Sigmoid colon (tissue), 7 donors: ENCODE measurements at regions of chr6 and their contacts with region 1.

Region 1: GRCh38 chr6:29887819-29888776 is 54.2 kb upstream of the HLA-A start:
- DNase-seq: peak; percentile 92
- H3K4me3 ChIP-seq: peak overlapping the region in 3 of 4 donors; percentile 45 to 62 (median 56)
- H3K27ac ChIP-seq: peak overlapping the region in 3 of 4 donors; percentile 84 to 91 (median 88)
- H3K4me1 ChIP-seq: peaks cover 0 to 3% (median 0%) of the 10 kb centered on the region in 4 donors
- H3K27me3 ChIP-seq: no peaks in the 10 kb centered on the region
- CTCF ChIP-seq: no peak
- EP300 ChIP-seq: no peak
- POLR2A ChIP-seq: no peak

Region 2: DNA sequence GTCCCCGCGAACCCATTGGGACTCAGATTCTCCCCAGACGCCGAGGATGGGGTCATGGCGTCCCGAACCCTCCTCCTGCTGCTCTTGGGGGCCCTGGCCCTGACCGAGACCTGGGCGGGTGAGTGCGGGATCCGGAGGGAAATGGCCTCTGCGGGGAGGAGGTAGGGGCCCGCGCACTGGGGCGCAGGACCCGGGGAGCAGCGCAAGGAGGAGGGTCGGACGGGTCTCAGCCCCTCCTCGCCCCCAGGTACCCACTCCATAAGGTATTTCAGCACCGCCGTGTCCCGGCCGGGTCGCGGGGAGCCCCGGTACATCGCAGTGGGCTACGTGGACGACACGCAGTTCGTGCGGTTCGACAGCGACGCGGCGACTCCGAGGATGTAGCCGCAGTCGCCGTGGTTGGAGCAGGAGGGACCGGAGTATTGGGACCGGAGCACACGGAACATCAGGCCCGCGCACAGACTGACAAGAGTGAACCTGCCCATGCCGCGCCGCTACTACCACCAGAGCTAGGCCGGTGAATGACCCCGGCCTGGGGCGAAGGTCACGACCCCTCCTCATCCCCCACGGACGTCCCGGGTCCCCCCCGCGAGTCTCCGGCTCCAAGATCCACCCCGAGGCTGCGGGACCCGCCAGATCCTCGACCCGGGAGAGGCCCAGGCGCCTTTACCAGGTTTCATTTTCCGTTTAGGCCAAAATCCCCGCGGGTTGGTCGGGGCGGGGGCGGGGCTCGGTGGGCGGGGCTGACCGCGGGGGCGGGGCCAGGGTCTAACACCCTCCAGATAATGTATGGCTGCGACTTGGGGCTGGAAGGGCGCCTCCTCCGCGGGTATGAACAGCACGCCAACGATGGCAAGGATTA is 38.5 kb after region 1 on chr6:
- intact Hi-C with region 1: loop called (anchors 5 kb)
- DNase-seq: peak; percentile 81
- H3K4me3 ChIP-seq: peak overlapping the region in 3 of 4 donors; percentile 48 to 69 (median 53)
- H3K27ac ChIP-seq: peak overlapping the region in 3 of 4 donors; percentile 82 to 86 (median 84)
- H3K4me1 ChIP-seq: peaks cover 0 to 4% (median 0%) of the 10 kb centered on the region in 4 donors
- H3K27me3 ChIP-seq: no peaks in the 10 kb centered on the region
- CTCF ChIP-seq: no peak
- EP300 ChIP-seq: no peak
- POLR2A ChIP-seq: peak; percentile 9 to 39

Region 3: GRCh38 chr6:29976588-29977424 is 88.7 kb after region 1 on chr6:
- intact Hi-C with region 1: loop called (anchors 2 kb)
- DNase-seq: peak; percentile 92
- H3K4me3 ChIP-seq: peak overlapping the region; percentile 26 to 58 (median 54)
- H3K27ac ChIP-seq: peak overlapping the region; percentile 89 to 97 (median 93)
- H3K4me1 ChIP-seq: peaks cover 0 to 27% (median 24%) of the 10 kb centered on the region in 4 donors
- H3K27me3 ChIP-seq: no peaks in the 10 kb centered on the region
- CTCF ChIP-seq: peak in 3 of 4 experiments; percentile 16 to 34 (median 18)
- EP300 ChIP-seq: no peak
- POLR2A ChIP-seq: peak; percentile 59 to 62

Region 4: GRCh38 chr6:30066577-30067459 is 178.7 kb after region 1 on chr6 and contains the start of gene PPP1R11:
- intact Hi-C with region 1: loop called (anchors 5 kb)
- DNase-seq: peak; percentile 100
- H3K4me3 ChIP-seq: peak within 1 kb of the TSS; percentile 52 to 80 (median 62)
- H3K27ac ChIP-seq: peak within 1 kb of the TSS; percentile 81 to 93 (median 88)
- H3K4me1 ChIP-seq: peaks cover 0 to 42% (median 37%) of the 10 kb centered on the region in 4 donors
- H3K27me3 ChIP-seq: peaks cover 5 to 27% (median 16%) of the 10 kb centered on the region in 3 donors
- CTCF ChIP-seq: no peak
- EP300 ChIP-seq: peak in 1 of 4 donors; percentile 91
- POLR2A ChIP-seq: peak; percentile 86 to 93
- total RNA-seq, gene PPP1R11: 36.8 to 45.7 (median 42.2) TPM